ENCODE measurements at regions of chr2 and their contacts with region 1.

Region 1: DNA sequence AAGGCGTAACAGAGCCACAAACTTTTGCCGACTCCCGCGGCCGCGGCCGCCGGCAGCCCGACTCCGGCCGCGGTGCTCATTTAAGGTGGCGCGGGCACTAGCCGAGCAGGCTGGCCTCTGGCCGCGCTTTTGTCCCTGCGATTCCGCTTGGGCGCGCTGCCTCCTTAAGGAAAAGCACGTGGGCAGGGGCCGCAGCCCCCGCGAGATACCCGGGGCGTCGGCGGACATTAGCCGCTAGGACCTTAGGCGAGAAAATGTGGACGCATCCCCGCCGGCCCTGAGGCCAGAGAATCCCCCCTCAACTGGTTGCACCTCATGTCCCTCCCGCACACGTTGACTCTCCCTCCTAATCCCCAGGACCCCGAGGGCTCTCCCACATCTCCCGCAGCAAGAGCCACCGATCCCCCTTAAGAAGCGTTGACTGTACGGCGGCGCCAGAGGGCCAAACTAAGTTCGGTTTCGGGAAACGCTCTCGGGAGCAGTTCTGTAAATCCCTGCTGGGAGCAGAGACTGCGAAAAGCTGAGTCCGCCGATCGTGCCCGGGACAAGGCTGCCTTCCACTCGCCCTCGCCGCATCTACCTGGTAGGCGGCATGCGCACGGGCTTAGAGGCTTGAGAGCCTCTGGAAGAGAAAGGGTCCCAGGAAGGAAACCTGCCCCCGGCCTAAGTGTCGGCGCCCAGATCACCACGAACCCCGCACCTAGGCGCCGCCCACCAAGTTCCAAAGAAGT is 1.7 kb upstream of the SATB2 start:
- DNase-seq: peak; percentile 94
- H3K4me3 ChIP-seq: peak overlapping the region; percentile 74 to 87 (median 83)
- H3K27ac ChIP-seq: peak overlapping the region; percentile 79 to 84 (median 82)
- H3K4me1 ChIP-seq: peaks cover 55 to 73% (median 65%) of the 10 kb centered on the region in 4 donors
- H3K27me3 ChIP-seq: peaks cover 8 to 84% (median 76%) of the 10 kb centered on the region in 4 donors
- CTCF ChIP-seq: no peak
- EP300 ChIP-seq: no peak
- POLR2A ChIP-seq: no peak

Region 2: DNA sequence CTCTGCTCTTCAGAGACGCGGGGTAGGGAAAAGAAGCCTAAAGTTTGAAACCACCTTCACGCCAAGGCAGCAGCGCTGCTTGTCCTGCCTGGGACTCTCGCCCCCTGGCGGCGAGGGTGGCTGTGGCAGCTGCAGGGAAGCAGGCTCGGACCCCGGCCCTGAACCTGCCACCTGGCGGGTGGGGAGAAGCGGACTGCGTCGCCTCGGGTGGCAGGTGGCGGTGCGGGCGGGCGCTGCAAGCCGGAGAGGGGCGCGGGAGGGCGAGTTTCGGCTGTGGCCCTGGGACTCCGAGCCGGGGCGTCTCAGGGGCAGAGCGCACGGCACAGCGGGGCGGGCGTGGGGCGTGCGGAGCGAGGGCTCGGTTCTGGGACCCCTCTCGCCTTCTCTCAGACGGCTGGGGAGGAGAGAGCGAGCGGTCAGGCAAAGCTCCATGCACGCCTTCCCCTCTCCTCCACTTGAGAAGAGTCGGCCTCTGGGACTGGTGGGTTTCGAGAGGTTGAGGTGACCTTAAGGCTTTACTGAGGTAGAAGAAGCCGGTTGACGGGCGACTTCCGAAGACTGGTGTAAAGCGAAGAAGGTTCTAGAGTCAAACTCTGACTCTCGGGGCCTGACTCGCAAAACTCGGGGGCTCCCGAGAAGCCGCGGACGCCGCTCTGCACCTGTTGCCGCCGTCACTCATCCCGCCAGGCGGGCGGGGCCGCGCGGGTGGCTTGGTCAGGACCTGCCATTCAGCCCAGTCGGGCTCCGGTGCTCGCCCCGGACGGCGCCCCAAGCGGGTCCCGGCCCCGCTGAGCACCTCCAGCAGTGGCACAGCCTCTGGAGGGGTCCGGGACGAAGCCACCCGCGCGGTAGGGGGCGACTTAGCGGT is 1673.2 kb before region 1 on chr2:
- intact Hi-C with region 1: loop called (anchors 10 kb)
- DNase-seq: no peak
- H3K4me3 ChIP-seq: peak overlapping the region; percentile 48 to 58 (median 53)
- H3K27ac ChIP-seq: no peak overlapping the region
- H3K4me1 ChIP-seq: peaks cover 0 to 14% (median 13%) of the 10 kb centered on the region in 4 donors
- H3K27me3 ChIP-seq: peaks cover 0 to 31% (median 15%) of the 10 kb centered on the region in 4 donors
- CTCF ChIP-seq: peak; percentile 13 to 48 (median 31)
- EP300 ChIP-seq: no peak
- POLR2A ChIP-seq: no peak

Measured in esophagus muscularis mucosa (tissue), 4 donors.